Left lung (tissue), 14 donors: ENCODE measurements at regions of chr19 and their contacts with region 1.

Region 1: GRCh38 chr19:55301459-55302317 is 17.9 kb downstream of the BRSK1 start:
- DNase-seq: peak; percentile 77 to 97 (median 92)
- ATAC-seq: peak; percentile 98
- H3K4me3 ChIP-seq: peak overlapping the region; percentile 5 to 26
- H3K27ac ChIP-seq: no peak overlapping the region
- H3K4me1 ChIP-seq: peaks cover 0 to 10% of the 10 kb centered on the region in 2 donors
- H3K27me3 ChIP-seq: peaks cover 0 to 12% of the 10 kb centered on the region in 2 donors
- CTCF ChIP-seq: peak; percentile 99

Region 2: GRCh38 chr19:55385740-55386529 is 84.2 kb after region 1 on chr19 and contains the start of gene RPL28:
- intact Hi-C with region 1: loop called in 1 of 2 experiments (anchors 10 kb)
- DNase-seq: peak; percentile 97 to 99 (median 98)
- ATAC-seq: peak; percentile 87
- H3K4me3 ChIP-seq: peak within 1 kb of the TSS; percentile 86 to 91
- H3K27ac ChIP-seq: peak within 1 kb of the TSS; percentile 96 to 97
- H3K4me1 ChIP-seq: peaks cover 30 to 63% of the 10 kb centered on the region in 2 donors
- H3K27me3 ChIP-seq: no peaks in the 10 kb centered on the region
- CTCF ChIP-seq: peak in 1 of 2 donors; percentile 10
- polyA plus RNA-seq, gene RPL28: 1,216 to 1,673 (median 1,335) TPM

Region 3: DNA sequence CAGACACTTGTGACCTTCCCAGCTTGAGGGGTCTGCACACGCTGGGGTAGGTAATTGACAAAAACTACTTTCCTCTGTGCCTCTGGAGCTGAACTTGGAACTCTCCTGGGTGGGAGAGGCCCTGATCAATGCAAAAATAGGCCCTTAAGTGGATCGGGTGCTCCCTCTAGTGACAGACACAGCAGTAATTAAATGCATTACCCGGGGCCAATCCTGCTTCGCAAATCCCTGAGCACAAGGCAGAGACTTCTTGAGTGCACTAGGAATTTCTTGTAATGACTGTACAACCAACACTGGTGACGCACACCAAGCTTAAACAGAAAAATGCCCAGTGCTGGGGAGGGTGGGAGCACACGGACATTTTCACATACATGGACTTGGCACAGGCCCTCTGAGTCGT is 116.5 kb after region 1 on chr19:
- intact Hi-C with region 1: loop called in 1 of 2 experiments (anchors 10 kb)
- DNase-seq: peak in 3 of 4 donors; percentile 52 to 81 (median 53)
- ATAC-seq: peak; percentile 95
- H3K4me3 ChIP-seq: no peak overlapping the region
- H3K27ac ChIP-seq: no peak overlapping the region
- H3K4me1 ChIP-seq: no peaks in the 10 kb centered on the region
- H3K27me3 ChIP-seq: peaks cover 0 to 23% of the 10 kb centered on the region in 2 donors
- CTCF ChIP-seq: peak; percentile 44 to 63